ENCODE measurements at regions of chr3 and their contacts with region 1.

Region 1: GRCh38 chr3:16048435-16049318 is 125.8 kb upstream of the GALNT15 start:
- H3K4me3 Mint-ChIP-seq: no peak overlapping the region
- H3K27ac Mint-ChIP-seq: no peak overlapping the region
- H3K4me1 Mint-ChIP-seq: peaks cover 13% of the 10 kb centered on the region
- H3K27me3 Mint-ChIP-seq: no peaks in the 10 kb centered on the region

Region 2: DNA sequence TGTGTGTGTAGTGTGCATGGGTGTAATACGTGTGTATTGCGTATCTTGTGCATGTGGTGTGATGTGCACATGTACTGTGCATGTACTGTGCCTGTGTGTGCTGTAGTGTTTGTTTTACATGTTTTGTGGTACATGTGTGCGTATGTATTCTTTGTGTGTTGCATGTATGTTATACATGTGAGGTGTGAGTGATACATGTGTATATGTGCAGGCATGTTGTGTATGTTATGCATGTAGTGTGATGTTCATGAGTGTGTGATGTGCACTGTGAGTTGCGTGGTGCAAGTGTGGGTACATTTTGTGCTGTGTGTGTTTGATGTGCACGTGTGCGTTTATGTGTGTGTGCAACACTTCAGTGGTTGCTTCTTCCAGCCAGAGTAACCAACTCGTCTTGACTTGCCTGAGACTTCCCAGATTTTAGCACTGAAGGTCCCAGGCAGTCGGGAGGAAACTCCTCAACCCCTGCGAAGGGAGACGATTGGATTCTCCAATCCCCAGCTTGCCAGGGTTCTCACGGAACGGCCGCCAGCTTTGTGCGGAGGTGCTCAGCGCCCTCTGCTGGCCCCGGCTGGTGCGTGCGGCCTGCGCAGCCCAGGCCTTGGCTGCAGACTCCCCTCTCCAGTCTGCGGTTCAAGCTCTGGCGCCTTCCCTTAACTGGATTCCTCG is 129.4 kb after region 1 on chr3:
- intact Hi-C with region 1: loop called (anchors 1 kb)
- H3K4me3 Mint-ChIP-seq: no peak overlapping the region
- H3K27ac Mint-ChIP-seq: no peak overlapping the region
- H3K4me1 Mint-ChIP-seq: peaks cover 18% of the 10 kb centered on the region
- H3K27me3 Mint-ChIP-seq: peaks cover 13% of the 10 kb centered on the region

Region 3: GRCh38 chr3:16247276-16248061 is 198.8 kb after region 1 on chr3:
- intact Hi-C with region 1: loop called (anchors 1 kb)
- H3K4me3 Mint-ChIP-seq: no peak overlapping the region
- H3K27ac Mint-ChIP-seq: no peak overlapping the region
- H3K4me1 Mint-ChIP-seq: peaks cover 5% of the 10 kb centered on the region
- H3K27me3 Mint-ChIP-seq: no peaks in the 10 kb centered on the region

Region 4: GRCh38 chr3:16550676-16551341 is 502.1 kb after region 1 on chr3:
- intact Hi-C with region 1: loop called (anchors 5 kb)
- H3K4me3 Mint-ChIP-seq: no peak overlapping the region
- H3K27ac Mint-ChIP-seq: no peak overlapping the region
- H3K4me1 Mint-ChIP-seq: peaks cover 5% of the 10 kb centered on the region
- H3K27me3 Mint-ChIP-seq: peaks cover 1% of the 10 kb centered on the region

Measured in dendritic cell treated with granulocyte-macrophage colony-stimulating factor and Interleukin-4, amounts not matched to agents 40 ng/mL and 50 ng/mL, for 4 days (primary cell).